ENCODE measurements at regions of chr5 and their contacts with region 1.

Region 1: GRCh38 chr5:132456296-132457001 is 34.1 kb downstream of the IRF1 start:
- DNase-seq: peak; percentile 72 to 86
- ATAC-seq: peak; percentile 57 to 81 (median 71)
- H3K4me3 ChIP-seq: peak overlapping the region; percentile 12
- H3K4me3 Mint-ChIP-seq: peak overlapping the region; percentile 93
- H3K27ac ChIP-seq: peak overlapping the region; percentile 97
- H3K27ac Mint-ChIP-seq: peak overlapping the region; percentile 97 to 100
- H3K4me1 ChIP-seq: peaks cover 80% of the 10 kb centered on the region
- H3K4me1 Mint-ChIP-seq: peaks cover 91 to 94% of the 10 kb centered on the region in 2 donors
- H3K27me3 ChIP-seq: no peaks in the 10 kb centered on the region
- H3K27me3 Mint-ChIP-seq: no peaks in the 10 kb centered on the region
- CTCF ChIP-seq: no peak

Region 2: DNA sequence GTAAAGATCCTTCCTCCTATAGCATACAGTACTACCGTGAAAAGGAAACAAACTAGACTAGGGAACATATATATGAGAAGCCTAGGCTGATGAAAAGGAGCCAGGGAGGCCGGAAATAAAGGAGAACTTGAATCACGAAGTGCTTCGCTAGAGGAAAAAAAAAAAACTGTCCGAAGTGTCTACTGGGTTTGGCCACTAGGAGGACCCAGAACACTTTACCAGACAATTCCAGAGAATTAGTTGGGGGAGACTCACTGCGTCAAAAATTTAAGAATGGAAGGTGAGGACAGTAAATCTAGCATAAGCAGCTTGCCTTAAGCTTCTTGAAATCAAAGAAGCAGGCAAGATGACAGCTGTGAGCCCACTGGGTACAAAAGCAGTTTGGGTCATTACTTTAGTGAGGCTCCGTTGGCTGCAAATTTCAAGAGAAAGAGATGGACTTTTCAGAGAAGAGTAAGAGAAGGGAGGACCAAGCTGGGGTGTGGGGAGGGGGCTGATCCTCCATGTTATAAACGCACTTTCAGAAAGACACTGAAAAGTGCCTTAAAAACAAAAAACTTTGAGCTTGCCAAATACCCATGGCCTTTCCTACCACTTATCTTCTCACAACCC is 276.2 kb before region 1 on chr5:
- intact Hi-C with region 1: no loop called
- DNase-seq: peak in 1 of 2 donors; percentile 30
- ATAC-seq: peak in 2 of 3 donors; percentile 44 to 66
- H3K4me3 ChIP-seq: no peak overlapping the region
- H3K4me3 Mint-ChIP-seq: no peak overlapping the region
- H3K27ac ChIP-seq: no peak overlapping the region
- H3K27ac Mint-ChIP-seq: no peak overlapping the region
- H3K4me1 ChIP-seq: no peaks in the 10 kb centered on the region
- H3K4me1 Mint-ChIP-seq: peaks cover 8 to 17% of the 10 kb centered on the region in 2 donors
- H3K27me3 ChIP-seq: no peaks in the 10 kb centered on the region
- H3K27me3 Mint-ChIP-seq: peaks cover 0 to 4% of the 10 kb centered on the region in 2 donors
- CTCF ChIP-seq: peak; percentile 65

Region 3: GRCh38 chr5:132466433-132467286 is 10.2 kb after region 1 on chr5:
- intact Hi-C with region 1: loop called (anchors 1 kb)
- DNase-seq: peak; percentile 78 to 88
- ATAC-seq: peak; percentile 57 to 81 (median 71)
- H3K4me3 ChIP-seq: peak overlapping the region; percentile 7
- H3K4me3 Mint-ChIP-seq: peak overlapping the region; percentile 80
- H3K27ac ChIP-seq: peak overlapping the region; percentile 85
- H3K27ac Mint-ChIP-seq: peak overlapping the region; percentile 97 to 100
- H3K4me1 ChIP-seq: peaks cover 93% of the 10 kb centered on the region
- H3K4me1 Mint-ChIP-seq: peaks cover 97 to 99% of the 10 kb centered on the region in 2 donors
- H3K27me3 ChIP-seq: no peaks in the 10 kb centered on the region
- H3K27me3 Mint-ChIP-seq: no peaks in the 10 kb centered on the region
- CTCF ChIP-seq: no peak

Region 4: GRCh38 chr5:132473019-132473531 is 16.6 kb after region 1 on chr5:
- intact Hi-C with region 1: loop called (anchors 2 kb)
- DNase-seq: peak; percentile 90 to 94
- ATAC-seq: peak; percentile 66 to 93 (median 72)
- H3K4me3 ChIP-seq: no peak overlapping the region
- H3K4me3 Mint-ChIP-seq: peak overlapping the region; percentile 78
- H3K27ac ChIP-seq: peak overlapping the region; percentile 85
- H3K27ac Mint-ChIP-seq: peak overlapping the region; percentile 97 to 100
- H3K4me1 ChIP-seq: peaks cover 99% of the 10 kb centered on the region
- H3K4me1 Mint-ChIP-seq: peaks cover 91 to 93% of the 10 kb centered on the region in 2 donors
- H3K27me3 ChIP-seq: no peaks in the 10 kb centered on the region
- H3K27me3 Mint-ChIP-seq: no peaks in the 10 kb centered on the region
- CTCF ChIP-seq: no peak

Measured in natural killer cell (primary cell).